ENCODE measurements at regions of chr7 and their contacts with region 1.

Region 1: DNA sequence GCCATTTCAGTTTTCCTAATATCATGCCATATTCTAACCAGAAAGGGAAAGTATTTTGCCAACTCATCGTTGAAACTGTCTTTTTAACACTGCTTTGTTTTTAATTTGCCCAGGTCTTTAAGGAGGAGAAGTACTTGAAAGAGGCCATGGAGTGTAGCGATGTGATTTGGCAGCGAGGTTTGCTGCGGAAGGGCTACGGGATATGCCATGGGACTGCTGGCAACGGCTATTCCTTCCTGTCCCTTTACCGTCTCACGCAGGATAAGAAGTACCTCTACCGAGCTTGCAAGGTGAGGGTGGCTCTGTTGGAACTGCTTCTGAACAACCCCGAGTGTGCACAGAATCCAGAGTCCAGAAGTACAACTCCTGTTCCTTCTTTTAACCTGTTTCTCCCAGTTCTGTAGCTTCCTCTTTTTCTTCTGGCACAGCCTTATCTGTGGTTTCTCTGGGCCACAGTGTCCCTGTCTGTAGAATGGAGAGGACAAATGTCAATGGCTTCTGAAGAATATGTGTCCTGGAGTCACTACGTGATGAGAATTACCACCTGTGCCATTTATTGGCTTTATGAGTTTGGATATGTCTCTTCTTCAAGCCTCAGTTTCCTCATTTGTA is 60.1 kb downstream of the LANCL2 start:
- DNase-seq: no peak
- ATAC-seq: no peak
- H3K4me3 ChIP-seq: no peak overlapping the region
- H3K4me3 Mint-ChIP-seq: no peak overlapping the region
- H3K27ac ChIP-seq: no peak overlapping the region
- H3K27ac Mint-ChIP-seq: no peak overlapping the region
- H3K4me1 ChIP-seq: no peaks in the 10 kb centered on the region
- H3K4me1 Mint-ChIP-seq: peaks cover 0 to 5% of the 10 kb centered on the region in 2 donors
- H3K27me3 ChIP-seq: no peaks in the 10 kb centered on the region
- H3K27me3 Mint-ChIP-seq: no peaks in the 10 kb centered on the region
- CTCF ChIP-seq: no peak

Region 2: GRCh38 chr7:54758702-54759592 is 666.3 kb before region 1 on chr7 and contains the start of gene SEC61G:
- intact Hi-C with region 1: no loop called
- DNase-seq: peak; percentile 94 to 99
- ATAC-seq: peak; percentile 98
- H3K4me3 ChIP-seq: peak within 1 kb of the TSS; percentile 65
- H3K4me3 Mint-ChIP-seq: peak within 1 kb of the TSS; percentile 97
- H3K27ac ChIP-seq: peak within 1 kb of the TSS; percentile 70
- H3K27ac Mint-ChIP-seq: peak within 1 kb of the TSS; percentile 89 to 91
- H3K4me1 ChIP-seq: peaks cover 6% of the 10 kb centered on the region
- H3K4me1 Mint-ChIP-seq: peaks cover 22 to 37% of the 10 kb centered on the region in 2 donors
- H3K27me3 ChIP-seq: no peaks in the 10 kb centered on the region
- H3K27me3 Mint-ChIP-seq: peaks cover 5 to 11% of the 10 kb centered on the region in 2 donors
- CTCF ChIP-seq: no peak
- total RNA-seq, gene SEC61G: 38.4 to 54.1 (median 41.0) TPM

Region 3: DNA sequence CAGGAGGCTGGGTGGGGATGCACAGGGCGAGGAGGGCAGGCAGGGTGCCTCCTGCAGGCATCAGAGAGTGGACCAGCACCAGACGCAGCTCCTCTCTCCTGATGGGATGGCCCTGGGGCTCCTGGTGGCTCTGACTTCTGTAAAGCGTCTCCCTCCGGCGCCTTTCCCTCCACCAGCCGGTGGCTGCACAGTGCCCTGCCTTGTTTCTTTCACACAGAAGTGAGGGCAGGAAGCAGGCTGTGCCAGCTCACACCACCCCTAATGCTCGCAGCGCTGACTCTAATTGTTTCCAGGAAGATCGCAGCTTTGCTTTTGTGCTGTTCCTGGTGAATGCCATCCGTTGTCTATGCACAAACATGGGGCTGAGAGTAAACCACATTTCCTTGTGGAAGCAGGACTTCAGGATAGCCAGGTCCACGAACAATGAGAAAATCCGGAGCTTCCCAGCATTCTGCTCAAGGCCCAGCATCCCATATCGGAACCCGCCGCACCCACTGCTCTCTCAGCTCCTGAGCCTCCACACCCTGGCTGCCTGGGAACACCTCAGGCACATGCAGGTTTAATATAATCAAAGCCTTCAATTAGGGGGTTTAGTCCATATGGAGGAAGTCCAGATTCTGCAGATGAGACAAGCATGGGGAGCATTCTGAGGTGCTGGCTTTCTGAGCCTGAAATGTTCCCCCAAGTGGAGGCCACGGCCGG is 212.3 kb before region 1 on chr7:
- intact Hi-C with region 1: no loop called
- DNase-seq: no peak
- ATAC-seq: no peak
- H3K4me3 ChIP-seq: no peak overlapping the region
- H3K4me3 Mint-ChIP-seq: no peak overlapping the region
- H3K27ac ChIP-seq: no peak overlapping the region
- H3K27ac Mint-ChIP-seq: no peak overlapping the region
- H3K4me1 ChIP-seq: no peaks in the 10 kb centered on the region
- H3K4me1 Mint-ChIP-seq: no peaks in the 10 kb centered on the region
- H3K27me3 ChIP-seq: no peaks in the 10 kb centered on the region
- H3K27me3 Mint-ChIP-seq: peaks cover 2 to 9% of the 10 kb centered on the region in 2 donors
- CTCF ChIP-seq: no peak

Region 4: GRCh38 chr7:55365675-55366460 is 59.4 kb before region 1 on chr7:
- intact Hi-C with region 1: no loop called
- DNase-seq: peak; percentile 97 to 98
- ATAC-seq: peak; percentile 85 to 97 (median 88)
- H3K4me3 ChIP-seq: peak overlapping the region; percentile 89
- H3K4me3 Mint-ChIP-seq: peak overlapping the region; percentile 96
- H3K27ac ChIP-seq: peak overlapping the region; percentile 98
- H3K27ac Mint-ChIP-seq: peak overlapping the region; percentile 97 to 100
- H3K4me1 ChIP-seq: peaks cover 13% of the 10 kb centered on the region
- H3K4me1 Mint-ChIP-seq: peaks cover 20 to 32% of the 10 kb centered on the region in 2 donors
- H3K27me3 ChIP-seq: no peaks in the 10 kb centered on the region
- H3K27me3 Mint-ChIP-seq: peaks cover 9 to 11% of the 10 kb centered on the region in 2 donors
- CTCF ChIP-seq: peak; percentile 37

Region 5: GRCh38 chr7:55409482-55410225 is 15.6 kb before region 1 on chr7:
- intact Hi-C with region 1: loop called (anchors 1 kb)
- DNase-seq: no peak
- ATAC-seq: no peak
- H3K4me3 ChIP-seq: no peak overlapping the region
- H3K4me3 Mint-ChIP-seq: no peak overlapping the region
- H3K27ac ChIP-seq: no peak overlapping the region
- H3K27ac Mint-ChIP-seq: no peak overlapping the region
- H3K4me1 ChIP-seq: no peaks in the 10 kb centered on the region
- H3K4me1 Mint-ChIP-seq: no peaks in the 10 kb centered on the region
- H3K27me3 ChIP-seq: no peaks in the 10 kb centered on the region
- H3K27me3 Mint-ChIP-seq: no peaks in the 10 kb centered on the region
- CTCF ChIP-seq: no peak

Measured in natural killer cell (primary cell).